CD4-positive, alpha-beta memory T cell (primary cell): ENCODE measurements at regions of chr2 and their contacts with region 1.

Region 1: DNA sequence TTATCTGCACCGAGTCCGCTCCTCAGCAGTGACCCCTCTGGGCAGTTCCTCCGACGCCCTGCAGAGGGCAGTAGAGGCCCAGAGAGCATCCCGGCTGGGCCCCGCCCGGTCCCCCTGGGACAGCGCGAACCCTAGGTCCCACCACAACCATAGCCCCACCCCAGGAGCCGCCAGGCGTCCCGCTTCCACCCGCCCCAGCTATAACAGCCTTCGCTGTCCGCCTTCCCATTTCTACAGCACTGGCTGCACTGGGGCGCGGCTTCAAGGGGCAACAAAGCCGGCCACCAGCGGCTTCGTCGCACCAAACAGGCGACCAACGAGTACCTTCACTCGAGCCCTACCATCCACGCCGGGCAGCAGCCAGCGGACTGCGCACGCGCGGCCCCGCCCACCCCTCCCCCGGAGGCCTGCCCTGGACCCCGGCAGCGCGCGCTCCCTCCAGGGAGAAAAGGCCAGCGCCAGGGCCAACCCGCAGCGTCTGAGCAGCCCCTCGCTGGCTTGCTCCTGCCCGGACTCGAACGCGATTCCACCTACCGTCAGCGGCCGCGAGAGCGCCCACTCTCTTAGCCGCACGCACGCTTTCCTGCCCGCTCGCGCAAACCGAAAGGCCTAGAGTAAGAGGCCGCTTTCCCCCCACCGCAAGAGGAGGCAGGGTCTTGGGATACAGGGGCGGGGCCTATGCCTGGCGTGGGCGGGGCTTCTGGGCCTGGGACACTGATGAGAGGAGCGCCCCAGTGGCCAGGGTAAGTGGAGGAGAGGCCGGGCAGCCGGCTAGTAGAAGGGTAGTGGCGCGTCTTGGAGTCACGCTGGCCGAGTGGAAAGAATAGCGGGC is at the start of gene NHEJ1:
- DNase-seq: peak; percentile 90 to 97 (median 93)
- H3K4me3 ChIP-seq: peak within 1 kb of the TSS in 1 of 2 donors; percentile 70
- H3K4me3 Mint-ChIP-seq: peak within 1 kb of the TSS; percentile 89 to 98 (median 94)
- H3K27ac ChIP-seq: peak within 1 kb of the TSS; percentile 71
- H3K27ac Mint-ChIP-seq: peak within 1 kb of the TSS; percentile 88 to 99 (median 95)
- H3K4me1 ChIP-seq: peaks cover 12% of the 10 kb centered on the region
- H3K4me1 Mint-ChIP-seq: peaks cover 14 to 21% (median 18%) of the 10 kb centered on the region in 4 donors
- H3K27me3 ChIP-seq: no peaks in the 10 kb centered on the region
- H3K27me3 Mint-ChIP-seq: no peaks in the 10 kb centered on the region
- total RNA-seq, gene NHEJ1: 14.1 to 15.5 TPM

Region 2: DNA sequence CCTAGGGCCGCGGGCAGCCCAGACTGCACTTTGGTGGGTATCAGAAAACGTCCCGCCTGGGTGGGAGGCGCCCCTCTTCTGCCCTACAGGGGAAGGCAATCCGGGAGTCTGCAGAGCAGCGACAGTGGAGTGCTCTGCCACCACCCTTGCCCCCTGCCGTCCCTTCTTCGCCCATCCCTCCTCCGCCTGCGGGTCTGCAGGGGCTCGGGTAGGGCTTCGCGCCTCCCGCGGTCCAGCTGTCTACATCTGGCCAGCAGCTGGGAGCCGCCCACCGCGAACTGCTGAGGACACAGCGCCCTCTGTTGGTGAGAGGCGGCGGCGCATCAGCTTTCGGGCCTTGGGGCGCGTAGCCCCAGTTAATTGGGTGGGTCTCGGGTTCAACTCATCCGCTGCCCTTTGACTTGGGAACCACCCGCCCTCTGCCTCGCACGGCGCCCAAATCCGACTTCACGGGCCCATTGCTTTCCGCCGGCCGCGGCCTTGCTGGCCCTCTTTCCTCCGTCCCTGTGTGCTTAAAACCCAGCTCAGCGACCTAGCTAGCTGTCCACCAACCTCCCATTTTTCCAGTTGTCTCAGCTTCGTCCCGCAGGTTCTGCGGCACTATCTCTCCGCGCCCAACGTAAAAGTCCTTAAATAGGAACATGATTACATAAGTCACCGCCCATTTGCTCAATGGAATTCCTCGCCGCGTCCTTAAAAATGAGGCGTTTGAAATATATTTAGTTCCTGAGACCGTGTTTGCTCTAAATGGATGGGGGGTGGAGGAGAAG is 262.1 kb before region 1 on chr2:
- CTCF ChIA-PET with region 1: interaction called, 3 read pairs
- POLR2A ChIA-PET with region 1: no interaction called
- intact Hi-C with region 1: loop called (anchors 5 kb)
- DNase-seq: peak; percentile 70 to 80 (median 71)
- H3K4me3 ChIP-seq: peak overlapping the region in 1 of 2 donors; percentile 64
- H3K4me3 Mint-ChIP-seq: peak overlapping the region; percentile 81 to 97 (median 84)
- H3K27ac ChIP-seq: peak overlapping the region; percentile 93
- H3K27ac Mint-ChIP-seq: peak overlapping the region; percentile 85 to 99 (median 95)
- H3K4me1 ChIP-seq: peaks cover 54% of the 10 kb centered on the region
- H3K4me1 Mint-ChIP-seq: peaks cover 33 to 49% (median 42%) of the 10 kb centered on the region in 4 donors
- H3K27me3 ChIP-seq: no peaks in the 10 kb centered on the region
- H3K27me3 Mint-ChIP-seq: peaks cover 8 to 17% of the 10 kb centered on the region in 2 donors

Region 3: GRCh38 chr2:218959141-218959731 is 201.2 kb before region 1 on chr2 and contains the start of gene CDK5R2:
- CTCF ChIA-PET with region 1: no interaction called
- POLR2A ChIA-PET with region 1: no interaction called
- intact Hi-C with region 1: no loop called
- DNase-seq: peak; percentile 41 to 61 (median 51)
- H3K4me3 ChIP-seq: no peak within 1 kb of the TSS
- H3K4me3 Mint-ChIP-seq: peak within 1 kb of the TSS in 7 of 8 donors; percentile 43 to 78 (median 71)
- H3K27ac ChIP-seq: no peak within 1 kb of the TSS
- H3K27ac Mint-ChIP-seq: no peak within 1 kb of the TSS
- H3K4me1 ChIP-seq: peaks cover 27% of the 10 kb centered on the region
- H3K4me1 Mint-ChIP-seq: peaks cover 8 to 31% (median 19%) of the 10 kb centered on the region in 4 donors
- H3K27me3 ChIP-seq: peaks cover 42% of the 10 kb centered on the region
- H3K27me3 Mint-ChIP-seq: peaks cover 56 to 57% of the 10 kb centered on the region in 2 donors
- total RNA-seq, gene CDK5R2: not detected

Region 4: GRCh38 chr2:219171231-219171651 is 10.8 kb after region 1 on chr2:
- CTCF ChIA-PET with region 1: interaction called, 89 read pairs
- POLR2A ChIA-PET with region 1: interaction called, 123 read pairs
- intact Hi-C with region 1: loop called (anchors 1 kb)
- DNase-seq: peak; percentile 39 to 58 (median 49)
- H3K4me3 ChIP-seq: no peak overlapping the region
- H3K4me3 Mint-ChIP-seq: peak overlapping the region in 1 of 8 donors; percentile 25
- H3K27ac ChIP-seq: no peak overlapping the region
- H3K27ac Mint-ChIP-seq: peak overlapping the region; percentile 35 to 91 (median 75)
- H3K4me1 ChIP-seq: peaks cover 31% of the 10 kb centered on the region
- H3K4me1 Mint-ChIP-seq: peaks cover 15 to 46% (median 31%) of the 10 kb centered on the region in 4 donors
- H3K27me3 ChIP-seq: no peaks in the 10 kb centered on the region
- H3K27me3 Mint-ChIP-seq: no peaks in the 10 kb centered on the region

Region 5: DNA sequence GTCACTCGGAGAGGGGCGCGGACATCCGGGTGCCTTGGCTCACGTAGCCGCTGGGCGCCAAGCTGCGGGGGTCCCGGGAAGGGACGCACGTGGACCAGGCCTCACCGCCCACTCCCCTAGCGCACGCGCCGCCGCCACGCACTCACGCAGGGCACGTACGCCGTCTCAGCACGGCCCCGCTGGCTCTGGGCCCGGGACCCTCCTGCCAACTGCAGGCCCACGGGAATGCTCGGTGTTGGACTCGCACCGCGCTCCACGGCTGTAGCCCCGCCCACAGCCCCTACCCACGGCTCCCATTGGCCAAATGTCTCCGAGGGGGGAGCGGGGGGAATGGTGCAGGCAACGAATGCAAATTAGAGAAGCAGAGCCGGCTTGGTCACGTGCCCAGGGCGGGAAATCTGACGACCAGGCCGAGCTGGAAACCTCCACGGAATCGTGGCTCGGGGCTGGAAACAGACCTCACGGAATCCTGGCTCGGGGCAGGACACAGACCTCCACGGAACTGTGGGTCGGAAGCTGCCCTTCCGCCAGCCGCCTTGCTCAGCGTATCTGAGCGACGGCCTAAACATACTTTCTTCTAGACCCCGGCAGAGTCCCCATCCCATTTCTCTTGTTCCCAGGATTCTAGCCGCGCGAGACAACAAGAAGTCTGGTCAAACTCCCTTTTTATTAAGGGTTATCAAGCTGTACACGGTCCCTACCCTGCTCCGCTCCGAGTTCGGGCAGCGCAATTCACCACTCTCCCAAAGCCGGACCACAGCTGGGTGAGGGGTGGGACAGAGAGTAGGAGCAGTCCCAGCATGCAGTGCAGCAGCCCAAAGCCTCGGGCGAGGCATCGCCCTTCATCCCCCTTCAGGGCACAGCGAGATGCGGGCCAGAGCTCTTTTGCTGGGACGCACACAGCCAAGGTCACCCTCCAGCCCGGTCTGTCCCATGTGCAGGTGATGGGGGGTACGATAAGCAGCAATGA is 58.6 kb after region 1 on chr2 and contains the start of gene ABCB6:
- CTCF ChIA-PET with region 1: interaction called, 186 read pairs
- POLR2A ChIA-PET with region 1: interaction called, 7 read pairs
- intact Hi-C with region 1: loop called (anchors 2 kb)
- DNase-seq: peak; percentile 81 to 93 (median 83)
- H3K4me3 ChIP-seq: peak within 1 kb of the TSS; percentile 49 to 68
- H3K4me3 Mint-ChIP-seq: peak within 1 kb of the TSS; percentile 82 to 93 (median 84)
- H3K27ac ChIP-seq: peak within 1 kb of the TSS; percentile 53
- H3K27ac Mint-ChIP-seq: peak within 1 kb of the TSS; percentile 74 to 96 (median 88)
- H3K4me1 ChIP-seq: peaks cover 24% of the 10 kb centered on the region
- H3K4me1 Mint-ChIP-seq: peaks cover 8 to 25% (median 19%) of the 10 kb centered on the region in 4 donors
- H3K27me3 ChIP-seq: no peaks in the 10 kb centered on the region
- H3K27me3 Mint-ChIP-seq: no peaks in the 10 kb centered on the region
- total RNA-seq, gene ABCB6: 10.7 to 11.1 TPM

Region 6: GRCh38 chr2:219253753-219254590 is 93.6 kb after region 1 on chr2 and contains the start of gene TUBA4A:
- CTCF ChIA-PET with region 1: interaction called, 6 read pairs
- POLR2A ChIA-PET with region 1: interaction called, 11 read pairs
- intact Hi-C with region 1: loop called (anchors 1 kb)
- DNase-seq: peak; percentile 89 to 90 (median 90)
- H3K4me3 ChIP-seq: peak within 1 kb of the TSS; percentile 94 to 100
- H3K4me3 Mint-ChIP-seq: peak within 1 kb of the TSS; percentile 85 to 99 (median 94)
- H3K27ac ChIP-seq: peak within 1 kb of the TSS; percentile 87
- H3K27ac Mint-ChIP-seq: peak within 1 kb of the TSS; percentile 92 to 98 (median 97)
- H3K4me1 ChIP-seq: peaks cover 42% of the 10 kb centered on the region
- H3K4me1 Mint-ChIP-seq: peaks cover 34 to 60% (median 45%) of the 10 kb centered on the region in 4 donors
- H3K27me3 ChIP-seq: no peaks in the 10 kb centered on the region
- H3K27me3 Mint-ChIP-seq: no peaks in the 10 kb centered on the region
- total RNA-seq, gene TUBA4A: 242 to 259 TPM

Region 7: GRCh38 chr2:219352448-219353023 is 192.1 kb after region 1 on chr2:
- CTCF ChIA-PET with region 1: interaction called, 4 read pairs
- POLR2A ChIA-PET with region 1: no interaction called
- intact Hi-C with region 1: loop called (anchors 1 kb)
- DNase-seq: peak; percentile 45 to 62 (median 57)
- H3K4me3 ChIP-seq: no peak overlapping the region
- H3K4me3 Mint-ChIP-seq: no peak overlapping the region
- H3K27ac ChIP-seq: no peak overlapping the region
- H3K27ac Mint-ChIP-seq: no peak overlapping the region
- H3K4me1 ChIP-seq: no peaks in the 10 kb centered on the region
- H3K4me1 Mint-ChIP-seq: peaks cover 0 to 2% (median 0%) of the 10 kb centered on the region in 4 donors
- H3K27me3 ChIP-seq: no peaks in the 10 kb centered on the region
- H3K27me3 Mint-ChIP-seq: peaks cover 32 to 40% of the 10 kb centered on the region in 2 donors